BJ (cell line): ENCODE measurements at regions of chr17 and their contacts with region 1.

Region 1: GRCh38 chr17:64276961-64277505 is 14.0 kb upstream of the TEX2 start:
- DNase-seq: no peak
- H3K4me3 ChIP-seq: no peak overlapping the region
- H3K27me3 ChIP-seq: no peaks in the 10 kb centered on the region
- CTCF ChIP-seq: no peak

Region 2: DNA sequence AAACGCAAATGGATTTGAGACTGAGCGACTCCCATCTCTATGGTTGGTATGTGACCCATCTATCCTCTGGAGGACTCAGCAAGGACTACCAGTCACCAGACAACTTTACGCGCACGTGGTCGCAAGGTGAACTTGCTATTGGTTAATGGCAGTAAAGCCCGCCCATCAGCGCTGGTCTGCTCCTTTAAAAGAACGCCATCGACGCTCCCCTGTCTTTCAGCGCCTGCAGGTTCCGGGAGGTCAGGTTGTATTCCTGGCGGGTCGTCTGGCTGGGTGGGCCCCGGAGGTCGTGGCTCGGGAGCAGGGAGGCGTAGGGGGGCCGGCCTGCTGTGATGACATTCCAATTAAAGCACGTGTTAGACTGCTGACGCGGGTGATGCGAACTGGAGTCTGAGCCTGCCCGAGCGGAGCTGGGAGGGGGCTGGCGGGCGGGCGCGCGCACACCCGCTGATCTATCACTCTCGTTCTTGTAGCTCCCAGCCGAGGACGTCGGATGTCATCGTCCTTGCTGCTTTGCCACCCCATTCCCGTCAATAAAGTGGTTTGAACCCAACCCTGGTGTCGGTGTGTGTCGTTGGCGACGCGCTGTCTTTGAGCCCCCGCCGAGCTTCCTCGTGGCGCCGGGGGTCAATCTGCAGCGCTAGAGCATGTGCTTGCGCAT is 131.1 kb before region 1 on chr17:
- CTCF ChIA-PET with region 1: interaction called, 35 read pairs
- POLR2A ChIA-PET with region 1: interaction called, 8 read pairs
- DNase-seq: peak; percentile 96
- H3K4me3 ChIP-seq: peak overlapping the region; percentile 88
- H3K27me3 ChIP-seq: no peaks in the 10 kb centered on the region
- CTCF ChIP-seq: no peak